Activated naive CD4-positive, alpha-beta T cell treated with anti-CD3 and anti-CD28 coated beads for 36 hours (primary cell): ENCODE measurements at regions of chr10 and their contacts with region 1.

Region 1: DNA sequence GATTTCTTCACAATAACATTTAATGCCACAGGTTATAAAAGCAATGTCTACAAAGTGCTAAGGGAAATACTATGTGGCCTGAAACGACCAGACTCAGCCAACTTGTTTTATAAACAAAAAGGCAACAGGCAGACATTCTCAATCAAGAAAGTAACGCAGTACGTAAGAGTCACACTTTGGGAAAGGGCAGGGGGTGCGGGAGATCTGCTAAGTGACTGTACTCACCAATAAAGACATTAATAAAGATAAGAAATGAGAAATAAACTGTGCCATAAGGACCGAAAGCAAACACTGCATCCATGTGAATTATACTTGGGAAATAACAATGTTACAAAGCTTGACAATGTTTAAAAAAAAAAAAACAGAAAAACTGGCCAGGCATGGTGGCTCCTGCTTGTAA is 25.5 kb downstream of the NSUN6 start:
- DNase-seq: no peak
- H3K4me3 Mint-ChIP-seq: no peak overlapping the region
- H3K27ac Mint-ChIP-seq: no peak overlapping the region
- H3K4me1 Mint-ChIP-seq: peaks cover 13% of the 10 kb centered on the region
- H3K27me3 Mint-ChIP-seq: no peaks in the 10 kb centered on the region

Region 2: DNA sequence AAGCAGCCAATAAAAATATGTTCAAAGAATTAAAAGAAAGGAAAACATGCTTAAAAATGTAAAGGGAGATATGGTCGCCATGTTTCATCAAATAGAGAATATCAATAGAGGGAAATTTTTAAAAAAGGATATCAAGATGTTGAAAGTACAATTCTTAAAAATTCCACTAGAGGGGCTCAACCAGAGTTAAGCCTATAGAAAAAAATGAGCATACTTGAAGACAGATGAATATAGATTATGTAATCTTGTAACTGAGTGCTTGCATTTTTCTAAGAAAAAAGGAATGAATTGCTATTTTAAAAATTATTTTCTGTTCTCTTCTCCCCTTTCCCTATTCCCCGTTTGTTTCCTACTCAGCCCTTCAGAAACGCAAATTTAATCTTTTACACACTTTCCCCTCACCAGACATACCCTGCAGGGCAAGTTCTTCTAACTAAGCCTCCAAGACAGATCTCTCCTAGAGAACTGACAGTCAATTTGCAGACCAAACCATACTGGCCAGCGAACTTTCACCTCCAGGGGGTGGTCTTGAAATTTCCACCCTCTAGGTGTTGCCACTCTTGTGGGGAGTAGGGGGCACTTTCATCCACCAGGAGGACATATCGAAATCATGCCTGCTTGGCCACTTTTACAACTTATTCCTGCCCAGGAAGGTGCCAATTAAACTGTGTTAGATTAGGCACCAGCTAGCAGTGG is 42.2 kb before region 1 on chr10:
- CTCF ChIA-PET with region 1: no interaction called
- intact Hi-C with region 1: no loop called
- DNase-seq: no peak
- H3K4me3 Mint-ChIP-seq: no peak overlapping the region
- H3K27ac Mint-ChIP-seq: no peak overlapping the region
- H3K4me1 Mint-ChIP-seq: peaks cover 10% of the 10 kb centered on the region
- H3K27me3 Mint-ChIP-seq: no peaks in the 10 kb centered on the region

Region 3: DNA sequence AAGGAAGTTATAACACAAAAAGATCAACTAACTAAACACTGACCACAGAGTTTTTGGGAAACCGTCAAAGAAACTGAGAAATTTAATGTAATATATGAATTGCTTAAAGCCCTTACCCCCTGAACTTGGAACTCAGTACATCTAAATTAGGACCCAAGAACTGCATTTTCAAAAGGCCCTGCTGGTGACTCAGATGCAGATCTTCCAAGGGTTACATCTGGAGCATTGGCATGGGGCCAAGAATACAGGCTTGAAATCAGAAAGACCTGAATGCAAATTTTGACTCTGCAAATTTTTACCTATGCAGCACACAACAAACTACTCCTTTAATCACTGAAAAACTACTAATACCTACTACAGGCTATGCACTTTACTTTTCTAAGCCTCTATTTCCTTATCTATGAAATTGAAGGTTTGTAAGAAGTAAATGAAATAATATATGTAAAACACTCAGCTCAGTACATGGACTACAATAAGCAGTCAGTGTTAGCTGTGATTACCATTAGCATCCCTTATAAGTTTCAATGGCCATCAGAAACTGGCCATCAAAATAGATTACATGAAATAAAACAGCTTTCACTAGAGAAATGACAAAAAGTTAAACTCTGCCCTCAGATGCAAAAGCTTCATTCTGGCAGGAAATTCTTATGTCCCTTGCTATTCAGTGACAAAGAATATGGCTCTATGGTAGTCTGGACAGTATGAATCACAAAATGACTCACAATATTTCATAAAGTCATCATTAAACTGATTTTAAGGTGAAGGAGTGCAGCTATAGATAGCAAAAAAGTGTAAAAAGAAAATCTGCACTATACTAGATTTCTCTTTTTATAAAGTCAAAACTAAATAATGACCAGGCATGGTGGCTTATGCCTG is 18.1 kb before region 1 on chr10:
- CTCF ChIA-PET with region 1: no interaction called
- intact Hi-C with region 1: no loop called
- DNase-seq: peak; percentile 20
- H3K4me3 Mint-ChIP-seq: no peak overlapping the region
- H3K27ac Mint-ChIP-seq: no peak overlapping the region
- H3K4me1 Mint-ChIP-seq: peaks cover 10% of the 10 kb centered on the region
- H3K27me3 Mint-ChIP-seq: no peaks in the 10 kb centered on the region

Region 4: GRCh38 chr10:18651324-18652007 is 25.6 kb after region 1 on chr10 and contains the start of gene NSUN6:
- CTCF ChIA-PET with region 1: no interaction called
- intact Hi-C with region 1: loop called (anchors 2 kb)
- DNase-seq: peak; percentile 95
- H3K4me3 Mint-ChIP-seq: peak within 1 kb of the TSS; percentile 93
- H3K27ac Mint-ChIP-seq: peak within 1 kb of the TSS; percentile 94
- H3K4me1 Mint-ChIP-seq: peaks cover 28% of the 10 kb centered on the region
- H3K27me3 Mint-ChIP-seq: no peaks in the 10 kb centered on the region
- total RNA-seq, gene NSUN6: 9.8 to 11.1 TPM

Region 5: GRCh38 chr10:18659120-18659818 is 33.4 kb after region 1 on chr10 and contains the start of gene ARL5B:
- CTCF ChIA-PET with region 1: no interaction called
- intact Hi-C with region 1: loop called (anchors 1 kb)
- DNase-seq: peak; percentile 97
- H3K4me3 Mint-ChIP-seq: peak within 1 kb of the TSS; percentile 93
- H3K27ac Mint-ChIP-seq: peak within 1 kb of the TSS; percentile 98
- H3K4me1 Mint-ChIP-seq: peaks cover 36% of the 10 kb centered on the region
- H3K27me3 Mint-ChIP-seq: no peaks in the 10 kb centered on the region
- total RNA-seq, gene ARL5B: 13.8 to 14.1 TPM